IMR-90 (cell line): ENCODE measurements at regions of chr20 and their contacts with region 1.

Region 1: DNA sequence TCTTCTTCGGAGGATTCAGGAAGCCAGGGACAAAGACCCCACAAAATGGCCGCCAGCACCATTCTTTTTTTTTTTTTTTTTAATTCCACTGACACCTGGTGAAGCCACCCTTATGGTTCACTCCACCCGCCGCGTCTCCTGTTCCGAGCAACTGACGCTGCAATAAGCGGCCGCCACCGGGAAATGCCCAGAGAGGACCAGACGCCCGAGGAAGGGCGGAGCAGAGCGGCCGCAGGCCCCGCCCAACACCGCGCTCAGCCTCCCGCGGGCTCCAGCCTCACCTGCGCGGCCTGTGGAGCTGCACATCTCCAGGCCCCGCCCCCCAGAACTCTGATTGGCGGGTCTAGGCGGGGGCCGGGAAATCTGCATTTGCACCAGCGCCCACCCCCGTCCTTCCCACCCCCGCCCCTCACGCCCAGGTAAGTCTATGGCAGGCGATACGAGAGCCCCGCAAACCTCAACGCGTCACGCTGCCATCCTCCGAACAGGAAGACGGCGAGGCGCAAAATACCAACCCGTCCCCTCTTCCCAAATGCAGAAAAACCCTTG is 1.1 kb downstream of the ATP9A start:
- DNase-seq: no peak
- ATAC-seq: peak; percentile 39
- H3K4me3 ChIP-seq: peak overlapping the region; percentile 76
- H3K27ac ChIP-seq: no peak overlapping the region
- H3K4me1 ChIP-seq: no peaks in the 10 kb centered on the region
- H3K27me3 ChIP-seq: no peaks in the 10 kb centered on the region
- CTCF ChIP-seq: no peak
- POLR2A ChIP-seq: no peak
- RAD21 ChIP-seq: no peak

Region 2: GRCh38 chr20:51703400-51704287 is 63.4 kb before region 1 on chr20:
- CTCF ChIA-PET with region 1: no interaction called
- POLR2A ChIA-PET with region 1: no interaction called
- dilution Hi-C with region 1: no loop called
- in situ Hi-C with region 1: no loop called
- intact Hi-C with region 1: loop called (anchors 5 kb)
- DNase-seq: no peak
- ATAC-seq: no peak
- H3K4me3 ChIP-seq: no peak overlapping the region
- H3K27ac ChIP-seq: no peak overlapping the region
- H3K4me1 ChIP-seq: peaks cover 3% of the 10 kb centered on the region
- H3K27me3 ChIP-seq: no peaks in the 10 kb centered on the region
- CTCF ChIP-seq: no peak
- POLR2A ChIP-seq: no peak
- RAD21 ChIP-seq: no peak

Region 3: GRCh38 chr20:51860111-51860882 is 93.2 kb after region 1 on chr20:
- CTCF ChIA-PET with region 1: no interaction called
- POLR2A ChIA-PET with region 1: no interaction called
- dilution Hi-C with region 1: no loop called
- in situ Hi-C with region 1: no loop called
- intact Hi-C with region 1: no loop called
- DNase-seq: peak; percentile 47
- ATAC-seq: peak; percentile 24; the same call in 1 of the 2 replicates
- H3K4me3 ChIP-seq: no peak overlapping the region
- H3K27ac ChIP-seq: no peak overlapping the region
- H3K4me1 ChIP-seq: no peaks in the 10 kb centered on the region
- H3K27me3 ChIP-seq: peaks cover 18% of the 10 kb centered on the region
- CTCF ChIP-seq: no peak
- POLR2A ChIP-seq: no peak
- RAD21 ChIP-seq: no peak

Region 4: DNA sequence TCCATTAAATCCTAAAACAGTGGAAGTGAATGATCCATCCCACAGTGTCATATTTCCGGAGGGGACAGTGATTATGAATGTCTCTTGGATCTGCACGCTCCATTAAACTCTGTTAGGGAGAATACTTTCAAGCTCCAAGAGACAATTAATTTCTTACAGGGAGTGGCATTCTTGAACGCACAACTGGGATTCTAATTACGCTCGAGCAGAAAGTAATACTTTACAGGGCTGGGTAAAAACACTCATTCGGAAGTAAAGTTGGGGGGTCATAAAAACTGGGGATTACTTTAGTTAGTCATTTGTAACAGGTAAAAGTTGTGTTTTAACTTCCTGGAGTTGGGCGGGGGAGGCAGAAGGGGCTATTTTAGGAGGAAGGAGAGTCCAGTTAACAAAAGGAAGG is 272.7 kb after region 1 on chr20:
- CTCF ChIA-PET with region 1: no interaction called
- POLR2A ChIA-PET with region 1: no interaction called
- dilution Hi-C with region 1: no loop called
- in situ Hi-C with region 1: no loop called
- intact Hi-C with region 1: no loop called
- DNase-seq: no peak
- ATAC-seq: no peak
- H3K4me3 ChIP-seq: no peak overlapping the region
- H3K27ac ChIP-seq: no peak overlapping the region
- H3K4me1 ChIP-seq: no peaks in the 10 kb centered on the region
- H3K27me3 ChIP-seq: no peaks in the 10 kb centered on the region
- CTCF ChIP-seq: no peak
- POLR2A ChIP-seq: no peak
- RAD21 ChIP-seq: no peak